HEK293 (cell line): ENCODE measurements at regions of chr10 and their contacts with region 1.

Region 1: DNA sequence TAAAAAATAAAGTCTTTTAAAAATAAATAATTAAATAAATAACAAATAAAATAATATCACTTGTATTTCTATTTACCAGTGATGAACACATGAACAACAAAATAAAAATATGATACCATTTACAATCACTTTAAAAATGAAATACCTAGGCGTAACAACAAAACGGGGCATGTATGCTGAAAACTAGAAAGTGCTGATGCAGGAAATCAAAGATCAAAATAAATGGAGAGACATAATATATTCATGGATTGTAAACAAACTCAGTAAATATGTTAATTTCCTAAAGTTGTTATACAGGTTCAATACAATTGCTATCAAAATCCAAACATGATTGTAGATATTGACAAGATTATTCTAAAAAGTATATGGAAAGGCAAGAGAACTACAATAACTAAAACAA is 19.2 kb upstream of the SFTPA2 start:
- H3K4me3 ChIP-seq: no peak overlapping the region
- H3K27ac ChIP-seq: no peak overlapping the region
- H3K4me1 ChIP-seq: no peaks in the 10 kb centered on the region
- CTCF ChIP-seq: no peak

Region 2: GRCh38 chr10:79502561-79503309 is 76.6 kb before region 1 on chr10:
- CTCF ChIA-PET with region 1: no interaction called
- POLR2A ChIA-PET with region 1: no interaction called
- H3K4me3 ChIP-seq: no peak overlapping the region
- H3K27ac ChIP-seq: no peak overlapping the region
- H3K4me1 ChIP-seq: no peaks in the 10 kb centered on the region
- CTCF ChIP-seq: peak; percentile 32; the same call in 1 of the 2 replicates

Region 3: DNA sequence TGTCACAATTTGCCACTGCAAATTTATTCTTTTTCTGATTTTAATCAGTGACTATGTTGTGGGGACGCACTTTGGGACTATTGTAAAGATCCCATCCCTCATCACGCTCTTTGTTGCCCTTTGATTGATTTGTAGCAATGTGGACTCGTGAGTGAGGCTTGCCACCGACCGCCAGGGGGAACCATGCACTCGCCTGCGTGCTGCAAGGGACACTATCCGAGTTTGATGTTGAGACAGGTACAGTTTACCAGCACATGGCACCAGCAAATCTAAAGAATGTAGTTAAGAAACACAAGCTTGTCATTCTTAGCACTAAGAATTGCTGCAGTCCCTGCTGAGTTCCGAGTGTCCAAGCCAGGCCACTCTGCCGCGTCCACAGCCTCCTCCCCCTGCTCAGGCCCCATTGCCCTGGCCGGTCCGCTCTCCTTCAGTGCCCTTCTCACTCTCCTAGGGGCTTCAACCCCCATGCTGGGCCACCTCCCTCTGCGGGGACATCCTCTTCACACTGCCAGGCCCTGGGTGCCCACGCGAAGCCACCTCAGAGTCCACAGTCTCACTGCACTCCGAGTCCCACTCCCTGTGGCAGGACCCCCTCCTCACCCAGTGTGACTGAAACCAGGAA is 17.1 kb before region 1 on chr10:
- CTCF ChIA-PET with region 1: interaction called, 10 read pairs
- POLR2A ChIA-PET with region 1: no interaction called
- H3K4me3 ChIP-seq: no peak overlapping the region
- H3K27ac ChIP-seq: no peak overlapping the region
- H3K4me1 ChIP-seq: no peaks in the 10 kb centered on the region
- CTCF ChIP-seq: peak; percentile 79